Dorsolateral prefrontal cortex (tissue), 120 donors: ENCODE measurements at regions of chr19 and their contacts with region 1.

Region 1: GRCh38 chr19:8444645-8445487 is at the start of gene HNRNPM:
- DNase-seq: peak; percentile 99 to 100 (median 100)
- H3K4me3 ChIP-seq: peak within 1 kb of the TSS; percentile 47 to 100 (median 98)
- H3K27ac ChIP-seq: peak within 1 kb of the TSS; percentile 80 to 99 (median 95)
- H3K27me3 ChIP-seq: no peaks in the 10 kb centered on the region
- CTCF ChIP-seq: peak in 28 of 56 donors; percentile 6 to 55 (median 26)
- total RNA-seq, gene HNRNPM: 99.2 to 179 (median 128) TPM

Region 2: GRCh38 chr19:8129060-8129459 is 315.8 kb before region 1 on chr19:
- intact Hi-C with region 1: no loop called
- DNase-seq: no peak
- H3K4me3 ChIP-seq: no peak overlapping the region
- H3K27ac ChIP-seq: no peak overlapping the region
- H3K27me3 ChIP-seq: peaks cover 0 to 26% (median 0%) of the 10 kb centered on the region in 45 donors
- CTCF ChIP-seq: no peak

Region 3: GRCh38 chr19:8396563-8397203 is 48.2 kb before region 1 on chr19:
- intact Hi-C with region 1: no loop called
- DNase-seq: peak in 9 of 10 donors; percentile 34 to 82 (median 71)
- H3K4me3 ChIP-seq: peak overlapping the region in 1 of 59 donors; percentile 6
- H3K27ac ChIP-seq: peak overlapping the region in 58 of 59 donors; percentile 39 to 100 (median 99)
- H3K27me3 ChIP-seq: no peaks in the 10 kb centered on the region
- CTCF ChIP-seq: peak; percentile 33 to 87 (median 71)

Region 4: GRCh38 chr19:8412783-8413628 is 31.9 kb before region 1 on chr19 and contains the start of gene MARCHF2:
- intact Hi-C with region 1: loop called in 1 of 2 experiments (anchors 1 kb)
- DNase-seq: peak; percentile 91 to 99 (median 96)
- H3K4me3 ChIP-seq: peak within 1 kb of the TSS; percentile 61 to 100 (median 90)
- H3K27ac ChIP-seq: peak within 1 kb of the TSS in 37 of 59 donors; percentile 7 to 80 (median 62)
- H3K27me3 ChIP-seq: no peaks in the 10 kb centered on the region
- CTCF ChIP-seq: peak; percentile 35 to 86 (median 72)
- total RNA-seq, gene MARCHF2: 61.3 to 163 (median 86.8) TPM